GM12878 (cell line): ENCODE measurements at regions of chr4 and their contacts with region 1.

Region 1: GRCh38 chr4:145618932-145619638 is at the start of gene MMAA:
- DNase-seq: peak; percentile 75
- ATAC-seq: peak; percentile 93
- H3K4me3 ChIP-seq: peak within 1 kb of the TSS; percentile 88
- H3K27ac ChIP-seq: peak within 1 kb of the TSS; percentile 89
- H3K4me1 ChIP-seq: peaks cover 9% of the 10 kb centered on the region; the same call in 1 of the 2 replicates
- H3K27me3 ChIP-seq: no peaks in the 10 kb centered on the region
- CTCF ChIP-seq: peak; percentile 42 to 63 (median 55)
- EP300 ChIP-seq: 0 out of 4 replicates have a peak, but pooled peaks of 1 of the 2 experiments have one; percentile 30
- POLR2A ChIP-seq: peak; percentile 99
- RAD21 ChIP-seq: peak; percentile 47
- polyA plus RNA-seq, gene MMAA: 9.2 to 11.0 TPM

Region 2: GRCh38 chr4:145154573-145154972 is 464.5 kb before region 1 on chr4:
- CTCF ChIA-PET with region 1: interaction called, 17 read pairs
- POLR2A ChIA-PET with region 1: no interaction called
- RAD21 ChIA-PET with region 1: interaction called, 8 read pairs
- SMC1A ChIA-PET with region 1: interaction called, 12 read pairs
- in situ Hi-C with region 1: loop called (anchors 5 kb)
- intact Hi-C with region 1: loop called (anchors 2 kb)
- DNase-seq: no peak
- ATAC-seq: peak; percentile 94
- H3K4me3 ChIP-seq: no peak overlapping the region
- H3K27ac ChIP-seq: peak overlapping the region; percentile 42; the same call in 1 of the 2 replicates
- H3K4me1 ChIP-seq: peaks cover 7% of the 10 kb centered on the region; the same call in 1 of the 2 replicates
- H3K27me3 ChIP-seq: no peaks in the 10 kb centered on the region
- CTCF ChIP-seq: peak; percentile 59 to 77 (median 70)
- EP300 ChIP-seq: no peak
- POLR2A ChIP-seq: no peak
- RAD21 ChIP-seq: peak; percentile 88

Region 3: GRCh38 chr4:145234091-145234706 is 384.9 kb before region 1 on chr4:
- CTCF ChIA-PET with region 1: interaction called, 86 read pairs
- POLR2A ChIA-PET with region 1: interaction called, 6 read pairs
- RAD21 ChIA-PET with region 1: interaction called, 23 read pairs
- SMC1A ChIA-PET with region 1: interaction called, 26 read pairs
- in situ Hi-C with region 1: loop called (anchors 5 kb)
- intact Hi-C with region 1: no loop called
- DNase-seq: peak; percentile 49
- ATAC-seq: peak; percentile 100
- H3K4me3 ChIP-seq: no peak overlapping the region
- H3K27ac ChIP-seq: no peak overlapping the region
- H3K4me1 ChIP-seq: no peaks in the 10 kb centered on the region
- H3K27me3 ChIP-seq: no peaks in the 10 kb centered on the region
- CTCF ChIP-seq: peak; percentile 84 to 93 (median 84)
- EP300 ChIP-seq: no peak
- POLR2A ChIP-seq: no peak
- RAD21 ChIP-seq: peak; percentile 100

Region 4: GRCh38 chr4:145557720-145558119 is 61.4 kb before region 1 on chr4:
- CTCF ChIA-PET with region 1: interaction called, 23 read pairs
- POLR2A ChIA-PET with region 1: no interaction called
- RAD21 ChIA-PET with region 1: interaction called, 10 read pairs
- SMC1A ChIA-PET with region 1: interaction called, 17 read pairs
- in situ Hi-C with region 1: no loop called
- intact Hi-C with region 1: loop called (anchors 5 kb)
- DNase-seq: peak; percentile 20
- ATAC-seq: peak; percentile 98
- H3K4me3 ChIP-seq: no peak overlapping the region
- H3K27ac ChIP-seq: no peak overlapping the region
- H3K4me1 ChIP-seq: peaks cover 2% of the 10 kb centered on the region; the same call in 1 of the 2 replicates
- H3K27me3 ChIP-seq: no peaks in the 10 kb centered on the region
- CTCF ChIP-seq: peak; percentile 92 to 96 (median 96)
- EP300 ChIP-seq: no peak
- POLR2A ChIP-seq: no peak
- RAD21 ChIP-seq: peak; percentile 95

Region 5: DNA sequence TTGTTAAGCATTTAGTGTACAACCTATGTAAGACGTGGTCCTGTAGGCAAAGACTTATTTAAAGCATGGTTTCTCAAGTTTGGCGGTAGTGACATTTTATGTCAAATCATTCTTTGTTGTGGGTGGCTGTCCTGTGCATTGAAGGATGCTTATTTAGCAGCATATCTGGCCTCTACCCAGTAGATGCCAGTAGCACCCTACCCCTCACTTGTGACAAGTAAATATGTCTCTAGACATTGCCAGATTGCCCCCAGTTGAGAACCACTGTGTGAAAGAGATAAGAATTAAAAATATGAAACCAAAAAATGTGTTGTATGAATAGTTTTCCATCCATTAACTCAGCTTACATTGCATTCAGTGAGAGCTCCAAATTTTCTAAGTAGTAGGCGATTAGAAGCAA is 25.6 kb after region 1 on chr4:
- CTCF ChIA-PET with region 1: interaction called, 19 read pairs
- POLR2A ChIA-PET with region 1: interaction called, 6 read pairs
- RAD21 ChIA-PET with region 1: interaction called, 4 read pairs
- SMC1A ChIA-PET with region 1: interaction called, 15 read pairs
- in situ Hi-C with region 1: no loop called
- intact Hi-C with region 1: no loop called
- DNase-seq: no peak
- ATAC-seq: no peak
- H3K4me3 ChIP-seq: no peak overlapping the region
- H3K27ac ChIP-seq: no peak overlapping the region
- H3K4me1 ChIP-seq: no peaks in the 10 kb centered on the region
- H3K27me3 ChIP-seq: no peaks in the 10 kb centered on the region
- CTCF ChIP-seq: no peak
- EP300 ChIP-seq: no peak
- POLR2A ChIP-seq: no peak
- RAD21 ChIP-seq: peak; percentile 19; the same call in 1 of the 2 replicates

Region 6: GRCh38 chr4:145819853-145820181 is 200.7 kb after region 1 on chr4:
- CTCF ChIA-PET with region 1: interaction called, 4 read pairs
- POLR2A ChIA-PET with region 1: no interaction called
- RAD21 ChIA-PET with region 1: interaction called, 3 read pairs
- SMC1A ChIA-PET with region 1: no interaction called
- in situ Hi-C with region 1: no loop called
- intact Hi-C with region 1: loop called (anchors 5 kb)
- DNase-seq: no peak
- ATAC-seq: peak; percentile 31
- H3K4me3 ChIP-seq: no peak overlapping the region
- H3K27ac ChIP-seq: no peak overlapping the region; the same call in 1 of the 2 replicates
- H3K4me1 ChIP-seq: peaks cover 29% of the 10 kb centered on the region
- H3K27me3 ChIP-seq: no peaks in the 10 kb centered on the region
- CTCF ChIP-seq: no peak
- EP300 ChIP-seq: no peak
- POLR2A ChIP-seq: no peak
- RAD21 ChIP-seq: no peak

Region 7: GRCh38 chr4:145979160-145979559 is 360.1 kb after region 1 on chr4:
- CTCF ChIA-PET with region 1: no interaction called
- POLR2A ChIA-PET with region 1: no interaction called
- RAD21 ChIA-PET with region 1: no interaction called
- SMC1A ChIA-PET with region 1: no interaction called
- in situ Hi-C with region 1: no loop called
- intact Hi-C with region 1: no loop called
- DNase-seq: no peak
- ATAC-seq: no peak
- H3K4me3 ChIP-seq: no peak overlapping the region
- H3K27ac ChIP-seq: no peak overlapping the region
- H3K4me1 ChIP-seq: no peaks in the 10 kb centered on the region
- H3K27me3 ChIP-seq: no peaks in the 10 kb centered on the region
- CTCF ChIP-seq: no peak
- EP300 ChIP-seq: no peak
- POLR2A ChIP-seq: no peak
- RAD21 ChIP-seq: no peak

Region 8: DNA sequence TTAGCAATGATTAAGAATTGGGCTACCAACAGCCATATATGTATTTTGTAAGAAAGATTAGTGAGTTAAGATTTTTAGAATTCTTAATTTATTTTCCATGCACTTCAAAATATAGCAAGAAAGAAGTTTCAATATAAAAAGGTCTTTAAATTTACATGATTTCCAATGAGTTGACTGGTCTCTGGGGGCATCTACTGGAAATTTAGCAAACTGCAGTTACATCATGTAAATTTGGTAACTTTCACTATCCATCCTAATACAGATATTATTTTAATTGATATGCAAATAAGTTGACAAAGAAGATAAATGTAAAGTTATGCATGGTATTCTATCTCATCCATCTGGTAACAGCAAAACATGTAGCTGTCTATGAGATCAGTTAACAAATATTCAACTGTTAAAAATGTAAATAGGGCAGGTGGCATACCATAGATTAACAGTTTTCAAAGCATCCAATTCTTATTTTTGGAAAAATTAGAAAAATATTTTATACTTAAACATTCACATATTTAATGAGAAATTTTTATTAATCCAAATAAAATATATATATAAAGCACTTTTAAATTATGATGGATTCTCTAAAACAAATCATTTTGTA is 1297.5 kb after region 1 on chr4:
- CTCF ChIA-PET with region 1: no interaction called
- POLR2A ChIA-PET with region 1: no interaction called
- RAD21 ChIA-PET with region 1: no interaction called
- SMC1A ChIA-PET with region 1: no interaction called
- in situ Hi-C with region 1: no loop called
- intact Hi-C with region 1: loop called (anchors 5 kb)
- DNase-seq: peak; percentile 2
- ATAC-seq: 0 out of 3 replicates have a peak, but pooled peaks have one; percentile 27
- H3K4me3 ChIP-seq: no peak overlapping the region
- H3K27ac ChIP-seq: no peak overlapping the region
- H3K4me1 ChIP-seq: no peaks in the 10 kb centered on the region
- H3K27me3 ChIP-seq: no peaks in the 10 kb centered on the region
- CTCF ChIP-seq: peak; percentile 57 to 65 (median 63)
- EP300 ChIP-seq: no peak
- POLR2A ChIP-seq: no peak
- RAD21 ChIP-seq: peak; percentile 86